ENCODE measurements at regions of chr14 and their contacts with region 1.

Region 1: DNA sequence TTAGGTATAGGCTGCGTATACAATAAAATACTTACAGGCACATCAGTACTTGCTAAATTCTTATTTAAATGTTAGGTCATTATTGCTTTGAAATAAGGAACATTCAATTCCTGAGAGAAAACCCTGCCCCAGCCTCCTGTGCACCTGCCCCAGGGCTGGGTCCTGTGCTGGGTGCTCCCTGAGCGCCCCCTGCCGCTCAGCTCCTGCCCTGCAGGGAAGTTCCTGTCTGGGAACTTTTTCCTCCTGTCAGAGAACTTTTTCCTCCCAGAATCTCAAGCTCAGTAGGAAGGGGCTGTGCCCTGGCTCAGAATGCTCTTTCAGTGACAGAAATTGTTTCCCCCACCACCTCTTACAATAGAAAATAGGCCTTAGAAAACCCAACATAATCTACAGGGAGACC is 751.1 kb downstream of the TMEM121 start:
- DNase-seq: no peak
- ATAC-seq: peak; percentile 81
- H3K4me3 ChIP-seq: no peak overlapping the region
- H3K27ac ChIP-seq: no peak overlapping the region
- H3K4me1 ChIP-seq: no peaks in the 10 kb centered on the region
- H3K27me3 ChIP-seq: peaks cover 0 to 3% of the 10 kb centered on the region in 2 experiments; a peak in 3 of 4 replicates
- CTCF ChIP-seq: peak; percentile 81 to 98 (median 94)
- EP300 ChIP-seq: no peak
- POLR2A ChIP-seq: no peak
- RAD21 ChIP-seq: peak; percentile 75

Region 2: GRCh38 chr14:105666420-105666819 is 611.1 kb before region 1 on chr14:
- CTCF ChIA-PET with region 1: no interaction called
- POLR2A ChIA-PET with region 1: no interaction called
- RAD21 ChIA-PET with region 1: no interaction called
- SMC1A ChIA-PET with region 1: no interaction called
- in situ Hi-C with region 1: loop called (anchors 10 kb)
- intact Hi-C with region 1: no loop called
- DNase-seq: no peak
- ATAC-seq: no peak
- H3K4me3 ChIP-seq: no peak overlapping the region
- H3K27ac ChIP-seq: no peak overlapping the region
- H3K4me1 ChIP-seq: no peaks in the 10 kb centered on the region
- H3K27me3 ChIP-seq: no peaks in the 10 kb centered on the region
- CTCF ChIP-seq: no peak
- EP300 ChIP-seq: no peak
- POLR2A ChIP-seq: no peak
- RAD21 ChIP-seq: no peak

Region 3: GRCh38 chr14:105709281-105710118 is 568.0 kb before region 1 on chr14:
- CTCF ChIA-PET with region 1: interaction called, 10 read pairs
- POLR2A ChIA-PET with region 1: no interaction called
- RAD21 ChIA-PET with region 1: interaction called, 10 read pairs
- SMC1A ChIA-PET with region 1: interaction called, 5 read pairs
- in situ Hi-C with region 1: loop called (anchors 10 kb)
- intact Hi-C with region 1: loop called (anchors 10 kb)
- DNase-seq: no peak
- ATAC-seq: no peak
- H3K4me3 ChIP-seq: no peak overlapping the region
- H3K27ac ChIP-seq: peak overlapping the region; percentile 74
- H3K4me1 ChIP-seq: peaks cover 15% of the 10 kb centered on the region
- H3K27me3 ChIP-seq: no peaks in the 10 kb centered on the region
- CTCF ChIP-seq: no peak
- EP300 ChIP-seq: no peak
- POLR2A ChIP-seq: no peak
- RAD21 ChIP-seq: no peak

Region 4: GRCh38 chr14:105830171-105830570 is 447.3 kb before region 1 on chr14:
- CTCF ChIA-PET with region 1: interaction called, 16 read pairs
- POLR2A ChIA-PET with region 1: interaction called, 4 read pairs
- RAD21 ChIA-PET with region 1: interaction called, 6 read pairs
- SMC1A ChIA-PET with region 1: interaction called, 6 read pairs
- in situ Hi-C with region 1: no loop called
- intact Hi-C with region 1: no loop called
- DNase-seq: no peak
- ATAC-seq: no peak
- H3K4me3 ChIP-seq: no peak overlapping the region
- H3K27ac ChIP-seq: no peak overlapping the region
- H3K4me1 ChIP-seq: no peaks in the 10 kb centered on the region
- H3K27me3 ChIP-seq: no peaks in the 10 kb centered on the region
- CTCF ChIP-seq: no peak
- EP300 ChIP-seq: no peak
- POLR2A ChIP-seq: no peak
- RAD21 ChIP-seq: no peak

Region 5: GRCh38 chr14:105861985-105862465 is 415.5 kb before region 1 on chr14:
- CTCF ChIA-PET with region 1: interaction called, 180 read pairs
- POLR2A ChIA-PET with region 1: interaction called, 12 read pairs
- RAD21 ChIA-PET with region 1: interaction called, 119 read pairs
- SMC1A ChIA-PET with region 1: interaction called, 25 read pairs
- in situ Hi-C with region 1: no loop called
- intact Hi-C with region 1: no loop called
- DNase-seq: peak; percentile 88
- ATAC-seq: peak; percentile 41
- H3K4me3 ChIP-seq: peak overlapping the region; percentile 84
- H3K27ac ChIP-seq: peak overlapping the region; percentile 98
- H3K4me1 ChIP-seq: no peaks in the 10 kb centered on the region
- H3K27me3 ChIP-seq: no peaks in the 10 kb centered on the region
- CTCF ChIP-seq: no peak
- EP300 ChIP-seq: peak; percentile 99 to 100
- POLR2A ChIP-seq: no peak
- RAD21 ChIP-seq: no peak

Region 6: GRCh38 chr14:106115401-106115800 is 162.1 kb before region 1 on chr14:
- CTCF ChIA-PET with region 1: no interaction called
- POLR2A ChIA-PET with region 1: no interaction called
- RAD21 ChIA-PET with region 1: no interaction called
- SMC1A ChIA-PET with region 1: no interaction called
- in situ Hi-C with region 1: no loop called
- intact Hi-C with region 1: no loop called
- DNase-seq: no peak
- ATAC-seq: no peak
- H3K4me3 ChIP-seq: no peak overlapping the region
- H3K27ac ChIP-seq: no peak overlapping the region
- H3K4me1 ChIP-seq: no peaks in the 10 kb centered on the region
- H3K27me3 ChIP-seq: no peaks in the 10 kb centered on the region
- CTCF ChIP-seq: no peak
- EP300 ChIP-seq: no peak
- POLR2A ChIP-seq: no peak
- RAD21 ChIP-seq: no peak

Region 7: GRCh38 chr14:106308839-106309389 is 31.4 kb after region 1 on chr14:
- CTCF ChIA-PET with region 1: interaction called, 274 read pairs
- POLR2A ChIA-PET with region 1: no interaction called
- RAD21 ChIA-PET with region 1: interaction called, 21 read pairs
- SMC1A ChIA-PET with region 1: interaction called, 34 read pairs
- in situ Hi-C with region 1: no loop called
- intact Hi-C with region 1: loop called (anchors 5 kb)
- DNase-seq: peak; percentile 83
- ATAC-seq: peak; percentile 99
- H3K4me3 ChIP-seq: no peak overlapping the region
- H3K27ac ChIP-seq: no peak overlapping the region
- H3K4me1 ChIP-seq: peaks cover 6% of the 10 kb centered on the region
- H3K27me3 ChIP-seq: no peaks in the 10 kb centered on the region
- CTCF ChIP-seq: peak; percentile 85 to 100 (median 100); a peak in 5 of 6 replicates
- EP300 ChIP-seq: no peak
- POLR2A ChIP-seq: no peak
- RAD21 ChIP-seq: peak; percentile 50